HCT116 (cell line): ENCODE measurements at regions of chr1 and their contacts with region 1.

Region 1: GRCh38 chr1:225772323-225772768 is 5.3 kb upstream of the SRP9 start:
- DNase-seq: peak; percentile 79
- ATAC-seq: peak; percentile 98
- H3K4me3 ChIP-seq: no peak overlapping the region
- H3K27ac ChIP-seq: no peak overlapping the region
- H3K4me1 ChIP-seq: peaks cover 6 to 27% of the 10 kb centered on the region in 2 experiments; a peak in 1 of 4 replicates
- H3K27me3 ChIP-seq: no peaks in the 10 kb centered on the region
- CTCF ChIP-seq: peak; percentile 89 to 97 (median 93)
- POLR2A ChIP-seq: no peak
- RAD21 ChIP-seq: peak; percentile 99

Region 2: GRCh38 chr1:225474986-225475820 is 297.1 kb before region 1 on chr1:
- CTCF ChIA-PET with region 1: interaction called, 25 read pairs
- POLR2A ChIA-PET with region 1: interaction called, 3 read pairs
- RAD21 ChIA-PET with region 1: interaction called, 4 read pairs
- intact Hi-C with region 1: loop called (anchors 1 kb)
- DNase-seq: peak; percentile 40
- ATAC-seq: peak; percentile 92
- H3K4me3 ChIP-seq: no peak overlapping the region
- H3K27ac ChIP-seq: no peak overlapping the region; the same call in 1 of the 2 replicates
- H3K4me1 ChIP-seq: peaks cover 3 to 10% of the 10 kb centered on the region in 2 experiments; a peak in 3 of 4 replicates
- H3K27me3 ChIP-seq: no peaks in the 10 kb centered on the region
- CTCF ChIP-seq: peak; percentile 100
- POLR2A ChIP-seq: no peak
- RAD21 ChIP-seq: peak; percentile 100

Region 3: GRCh38 chr1:225480825-225481434 is 291.4 kb before region 1 on chr1:
- CTCF ChIA-PET with region 1: interaction called, 25 read pairs
- POLR2A ChIA-PET with region 1: no interaction called
- RAD21 ChIA-PET with region 1: interaction called in 1 of 2 experiments, 3 read pairs
- intact Hi-C with region 1: loop called (anchors 1 kb)
- DNase-seq: peak; percentile 38
- ATAC-seq: peak; percentile 95
- H3K4me3 ChIP-seq: no peak overlapping the region
- H3K27ac ChIP-seq: no peak overlapping the region
- H3K4me1 ChIP-seq: no peaks in the 10 kb centered on the region
- H3K27me3 ChIP-seq: no peaks in the 10 kb centered on the region
- CTCF ChIP-seq: peak; percentile 94 to 99 (median 98)
- POLR2A ChIP-seq: no peak
- RAD21 ChIP-seq: peak; percentile 97

Region 4: DNA sequence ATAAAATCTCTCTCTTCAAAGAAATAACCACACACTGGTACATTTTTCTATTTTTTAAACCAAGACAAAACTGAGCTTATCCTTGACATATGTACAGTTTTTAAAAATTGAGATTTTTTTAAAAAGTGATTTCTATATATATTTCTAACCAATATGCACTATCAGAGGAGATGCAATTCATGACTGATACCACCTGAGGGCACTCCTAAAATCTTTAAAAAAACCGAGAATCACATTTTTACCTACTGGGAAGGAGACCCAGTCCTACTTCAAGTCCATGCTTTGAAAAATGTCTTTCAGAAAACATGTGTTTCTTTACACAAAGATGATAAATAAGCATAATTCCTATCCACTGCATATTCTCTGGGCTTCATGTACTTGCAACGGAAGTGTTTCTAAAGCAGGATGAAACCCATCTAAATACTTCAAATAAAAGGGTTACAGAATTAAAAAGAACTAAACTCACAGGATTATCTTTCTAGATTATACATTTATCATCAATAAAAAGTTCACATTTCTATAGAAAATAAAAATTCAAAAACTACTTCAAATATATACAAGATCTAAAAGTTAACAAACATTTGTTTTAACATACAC is 218.0 kb before region 1 on chr1:
- CTCF ChIA-PET with region 1: interaction called, 4 read pairs
- POLR2A ChIA-PET with region 1: no interaction called
- RAD21 ChIA-PET with region 1: no interaction called
- intact Hi-C with region 1: loop called (anchors 1 kb)
- DNase-seq: peak; percentile 18
- ATAC-seq: peak; percentile 54; the same call in 1 of the 2 replicates
- H3K4me3 ChIP-seq: no peak overlapping the region
- H3K27ac ChIP-seq: no peak overlapping the region
- H3K4me1 ChIP-seq: no peaks in the 10 kb centered on the region
- H3K27me3 ChIP-seq: no peaks in the 10 kb centered on the region
- CTCF ChIP-seq: peak; percentile 54 to 62 (median 61); a peak in 5 of 6 replicates
- POLR2A ChIP-seq: no peak
- RAD21 ChIP-seq: peak; percentile 70

Region 5: GRCh38 chr1:225652729-225653462 is 119.5 kb before region 1 on chr1 and contains the start of gene ENAH:
- CTCF ChIA-PET with region 1: interaction called, 8 read pairs
- POLR2A ChIA-PET with region 1: interaction called, 4 read pairs
- RAD21 ChIA-PET with region 1: no interaction called
- intact Hi-C with region 1: loop called (anchors 5 kb)
- DNase-seq: no peak
- ATAC-seq: peak; percentile 76
- H3K4me3 ChIP-seq: peak within 1 kb of the TSS; percentile 54 to 75
- H3K27ac ChIP-seq: peak within 1 kb of the TSS; percentile 84
- H3K4me1 ChIP-seq: peaks cover 40 to 53% of the 10 kb centered on the region in 2 experiments
- H3K27me3 ChIP-seq: no peaks in the 10 kb centered on the region
- CTCF ChIP-seq: no peak
- POLR2A ChIP-seq: peak; percentile 76
- RAD21 ChIP-seq: no peak
- total RNA-seq, gene ENAH: 100 TPM